A673 (cell line): ENCODE measurements at regions of chr1 and their contacts with region 1.

Region 1: GRCh38 chr1:203038891-203039608 is 12.8 kb downstream of the PPFIA4 start:
- DNase-seq: peak; percentile 87
- H3K4me3 ChIP-seq: no peak overlapping the region
- H3K27ac ChIP-seq: no peak overlapping the region
- H3K4me1 ChIP-seq: no peaks in the 10 kb centered on the region
- H3K27me3 ChIP-seq: no peaks in the 10 kb centered on the region
- CTCF ChIP-seq: peak; percentile 96

Region 2: GRCh38 chr1:202976633-202977032 is 62.4 kb before region 1 on chr1:
- CTCF ChIA-PET with region 1: no interaction called
- POLR2A ChIA-PET with region 1: no interaction called
- intact Hi-C with region 1: no loop called
- DNase-seq: peak; percentile 60
- H3K4me3 ChIP-seq: no peak overlapping the region
- H3K27ac ChIP-seq: no peak overlapping the region
- H3K4me1 ChIP-seq: no peaks in the 10 kb centered on the region
- H3K27me3 ChIP-seq: peaks cover 17% of the 10 kb centered on the region
- CTCF ChIP-seq: no peak

Region 3: GRCh38 chr1:203117611-203118575 is 78.8 kb after region 1 on chr1:
- CTCF ChIA-PET with region 1: interaction called, 11 read pairs
- POLR2A ChIA-PET with region 1: no interaction called
- intact Hi-C with region 1: no loop called
- DNase-seq: peak; percentile 74
- H3K4me3 ChIP-seq: no peak overlapping the region
- H3K27ac ChIP-seq: no peak overlapping the region
- H3K4me1 ChIP-seq: peaks cover 2% of the 10 kb centered on the region
- H3K27me3 ChIP-seq: peaks cover 45% of the 10 kb centered on the region
- CTCF ChIP-seq: peak; percentile 66

Region 4: GRCh38 chr1:203172128-203173010 is 133.3 kb after region 1 on chr1:
- CTCF ChIA-PET with region 1: interaction called, 23 read pairs
- POLR2A ChIA-PET with region 1: no interaction called
- intact Hi-C with region 1: loop called (anchors 1 kb)
- DNase-seq: peak; percentile 73
- H3K4me3 ChIP-seq: no peak overlapping the region
- H3K27ac ChIP-seq: no peak overlapping the region
- H3K4me1 ChIP-seq: peaks cover 5% of the 10 kb centered on the region
- H3K27me3 ChIP-seq: no peaks in the 10 kb centered on the region
- CTCF ChIP-seq: peak; percentile 90

Region 5: GRCh38 chr1:203216274-203217138 is 177.5 kb after region 1 on chr1:
- CTCF ChIA-PET with region 1: interaction called, 65 read pairs
- POLR2A ChIA-PET with region 1: no interaction called
- intact Hi-C with region 1: loop called (anchors 1 kb)
- DNase-seq: peak; percentile 81
- H3K4me3 ChIP-seq: no peak overlapping the region
- H3K27ac ChIP-seq: no peak overlapping the region
- H3K4me1 ChIP-seq: no peaks in the 10 kb centered on the region
- H3K27me3 ChIP-seq: no peaks in the 10 kb centered on the region
- CTCF ChIP-seq: peak; percentile 74

Region 6: GRCh38 chr1:203267347-203267846 is 228.3 kb after region 1 on chr1:
- CTCF ChIA-PET with region 1: interaction called, 52 read pairs
- POLR2A ChIA-PET with region 1: no interaction called
- intact Hi-C with region 1: loop called (anchors 2 kb)
- DNase-seq: peak; percentile 95
- H3K4me3 ChIP-seq: peak overlapping the region; percentile 52
- H3K27ac ChIP-seq: peak overlapping the region; percentile 39
- H3K4me1 ChIP-seq: peaks cover 16% of the 10 kb centered on the region
- H3K27me3 ChIP-seq: no peaks in the 10 kb centered on the region
- CTCF ChIP-seq: peak; percentile 94

Region 7: GRCh38 chr1:204072931-204073836 is 1034.1 kb after region 1 on chr1 and contains the start of gene SOX13:
- CTCF ChIA-PET with region 1: no interaction called
- POLR2A ChIA-PET with region 1: no interaction called
- intact Hi-C with region 1: no loop called
- DNase-seq: peak; percentile 87
- H3K4me3 ChIP-seq: peak within 1 kb of the TSS; percentile 79
- H3K27ac ChIP-seq: peak within 1 kb of the TSS; percentile 37
- H3K4me1 ChIP-seq: peaks cover 7% of the 10 kb centered on the region
- H3K27me3 ChIP-seq: no peaks in the 10 kb centered on the region
- CTCF ChIP-seq: no peak
- total RNA-seq, gene SOX13: 9.4 and 11.5 TPM in 2 replicates